ENCODE measurements at regions of chr11 and their contacts with region 1.

Region 1: GRCh38 chr11:43895601-43896000 is 15.0 kb downstream of the ALKBH3 start:
- DNase-seq: no peak
- ATAC-seq: no peak
- H3K4me3 ChIP-seq: no peak overlapping the region
- H3K27ac ChIP-seq: no peak overlapping the region
- H3K4me1 ChIP-seq: no peaks in the 10 kb centered on the region
- H3K27me3 ChIP-seq: no peaks in the 10 kb centered on the region
- CTCF ChIP-seq: no peak
- POLR2A ChIP-seq: no peak

Region 2: DNA sequence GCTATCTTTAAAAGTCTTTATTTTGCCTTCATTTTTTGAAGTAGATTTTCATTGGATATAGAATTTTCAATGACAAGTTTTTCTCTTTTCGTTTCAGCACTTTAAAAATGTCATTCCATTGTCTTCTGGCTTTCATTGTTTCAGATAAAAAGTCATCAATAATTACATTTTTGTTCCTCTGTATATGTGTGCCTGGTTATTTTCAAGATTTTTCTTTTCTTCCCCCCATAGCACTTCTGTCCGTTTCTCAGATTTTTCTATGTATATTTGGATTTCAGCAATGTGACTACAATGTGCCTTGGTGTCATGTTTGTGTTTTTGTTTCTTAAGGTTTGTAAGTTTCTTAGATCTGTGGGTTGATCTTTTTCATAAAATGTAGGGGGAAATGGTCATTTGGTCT is 281.4 kb before region 1 on chr11:
- intact Hi-C with region 1: no loop called
- DNase-seq: no peak
- ATAC-seq: no peak
- H3K4me3 ChIP-seq: no peak overlapping the region
- H3K27ac ChIP-seq: no peak overlapping the region
- H3K4me1 ChIP-seq: no peaks in the 10 kb centered on the region
- H3K27me3 ChIP-seq: peaks cover 0 to 5% (median 0%) of the 10 kb centered on the region in 9 donors
- CTCF ChIP-seq: no peak
- POLR2A ChIP-seq: no peak

Region 3: GRCh38 chr11:43830928-43831440 is 64.6 kb before region 1 on chr11:
- intact Hi-C with region 1: loop called in 1 of 10 experiments (anchors 10 kb)
- DNase-seq: peak in 1 of 5 donors; percentile 46
- ATAC-seq: peak in 3 of 4 donors; percentile 24 to 89 (median 85)
- H3K4me3 ChIP-seq: no peak overlapping the region
- H3K27ac ChIP-seq: peak overlapping the region in 2 of 12 donors; percentile 24
- H3K4me1 ChIP-seq: peaks cover 0 to 20% (median 3%) of the 10 kb centered on the region in 12 donors
- H3K27me3 ChIP-seq: no peaks in the 10 kb centered on the region
- CTCF ChIP-seq: no peak
- POLR2A ChIP-seq: no peak

Region 4: DNA sequence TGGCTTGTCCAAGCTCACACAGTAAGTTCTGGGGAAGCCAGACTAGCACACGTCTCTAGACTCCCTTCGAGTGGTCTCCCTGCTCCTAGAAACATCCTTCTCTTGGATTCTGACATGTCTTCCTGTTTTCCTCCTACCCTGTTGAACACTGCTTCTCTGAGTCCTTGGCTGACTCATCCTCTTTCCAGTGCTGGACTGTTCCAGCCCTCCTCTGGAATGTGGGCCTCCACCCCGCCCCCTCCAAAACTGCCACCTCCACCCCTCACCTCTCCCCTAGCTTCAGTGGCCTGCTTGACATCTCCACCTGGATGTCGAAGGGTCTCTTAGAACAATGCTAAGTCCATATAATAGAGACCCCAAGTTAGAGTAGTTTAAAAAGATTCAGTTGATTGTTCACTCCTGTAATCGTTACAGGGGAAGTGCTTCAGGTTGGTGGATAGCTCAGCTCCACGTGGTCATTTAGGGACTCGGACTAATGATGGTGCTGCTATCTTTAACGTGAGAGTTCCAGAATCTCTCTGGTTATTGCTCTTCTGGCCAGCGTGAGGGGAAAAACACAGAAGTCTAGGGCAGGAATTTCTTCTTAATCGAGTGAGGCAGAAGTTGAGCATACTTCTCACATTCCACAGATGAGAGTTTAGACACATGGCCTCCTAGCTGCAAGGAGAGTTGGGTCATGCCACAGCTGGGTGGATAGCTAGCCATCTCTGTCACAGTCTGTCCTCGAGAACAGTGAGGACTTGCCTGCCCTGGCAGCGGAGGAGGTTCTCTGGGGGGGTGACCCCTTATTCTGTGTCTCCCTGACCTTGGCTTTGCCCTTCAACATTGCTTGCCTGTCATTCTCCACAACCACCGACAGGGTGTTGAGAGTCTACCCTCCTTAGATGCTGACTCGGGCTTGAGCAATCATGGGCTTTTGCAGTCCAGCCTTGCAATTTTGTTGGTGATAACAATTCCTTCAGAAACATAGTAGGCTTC is 42.1 kb after region 1 on chr11:
- intact Hi-C with region 1: loop called in 7 of 10 experiments (anchors 2 to 10 kb)
- DNase-seq: no peak
- ATAC-seq: peak in 1 of 4 donors; percentile 17
- H3K4me3 ChIP-seq: no peak overlapping the region
- H3K27ac ChIP-seq: no peak overlapping the region
- H3K4me1 ChIP-seq: peaks cover 0 to 15% (median 0%) of the 10 kb centered on the region in 12 donors
- H3K27me3 ChIP-seq: peaks cover 0 to 14% (median 0%) of the 10 kb centered on the region in 9 donors
- CTCF ChIP-seq: peak in 2 of 12 donors; percentile 3 to 8
- POLR2A ChIP-seq: no peak

Region 5: GRCh38 chr11:43979571-43980190 is 84.1 kb after region 1 on chr11:
- intact Hi-C with region 1: no loop called
- DNase-seq: no peak
- ATAC-seq: no peak
- H3K4me3 ChIP-seq: no peak overlapping the region
- H3K27ac ChIP-seq: no peak overlapping the region
- H3K4me1 ChIP-seq: peaks cover 0 to 12% (median 8%) of the 10 kb centered on the region in 12 donors
- H3K27me3 ChIP-seq: no peaks in the 10 kb centered on the region
- CTCF ChIP-seq: no peak
- POLR2A ChIP-seq: no peak

Region 6: DNA sequence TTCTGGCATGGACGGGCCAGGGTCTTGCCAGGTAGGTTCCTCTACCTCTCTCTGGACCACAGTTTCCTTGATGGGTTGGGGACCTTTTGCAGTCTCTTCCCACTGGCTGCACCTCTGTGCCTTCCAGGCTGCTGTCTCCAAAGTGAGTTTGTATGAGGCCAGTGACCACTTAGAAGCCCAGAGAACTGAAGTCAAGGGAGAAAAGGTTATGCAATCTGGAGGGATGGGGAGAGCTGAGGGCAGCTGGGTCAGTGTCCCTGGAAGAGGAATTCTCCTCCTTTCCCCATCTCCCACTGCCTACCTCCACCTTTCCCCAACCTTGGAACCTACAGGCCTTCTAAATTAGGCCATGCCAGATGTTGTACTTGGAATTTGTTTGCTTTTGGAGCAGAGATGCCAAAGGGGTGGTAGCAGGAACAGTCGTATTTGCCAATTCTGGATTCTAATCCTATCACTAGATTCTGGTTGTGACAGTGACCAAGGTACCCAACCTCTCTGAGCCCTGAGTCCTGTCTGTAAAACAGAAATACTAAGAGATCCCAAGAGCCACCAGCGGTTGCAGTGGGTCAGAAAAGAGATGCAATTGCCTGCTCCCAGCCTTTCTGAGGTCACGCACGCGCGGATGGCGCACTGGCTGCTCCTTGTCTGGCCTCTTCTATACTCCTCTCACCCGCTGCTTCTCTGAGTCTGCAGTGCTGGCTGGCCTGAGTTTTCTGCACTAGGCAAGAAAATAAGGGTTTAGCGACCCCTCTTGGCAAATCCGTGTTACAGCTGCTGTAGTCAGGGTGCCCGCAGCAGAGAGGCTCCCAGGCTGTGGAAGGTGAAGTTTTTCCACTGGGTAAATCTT is 141.4 kb after region 1 on chr11:
- intact Hi-C with region 1: loop called (anchors 1 to 2 kb)
- DNase-seq: peak; percentile 81 to 90 (median 88)
- ATAC-seq: peak; percentile 85 to 94 (median 92)
- H3K4me3 ChIP-seq: no peak overlapping the region
- H3K27ac ChIP-seq: peak overlapping the region in 2 of 12 donors; percentile 33 to 52
- H3K4me1 ChIP-seq: peaks cover 0 to 26% (median 16%) of the 10 kb centered on the region in 12 donors
- H3K27me3 ChIP-seq: no peaks in the 10 kb centered on the region
- CTCF ChIP-seq: peak; percentile 63 to 95 (median 88)
- POLR2A ChIP-seq: no peak

Region 7: DNA sequence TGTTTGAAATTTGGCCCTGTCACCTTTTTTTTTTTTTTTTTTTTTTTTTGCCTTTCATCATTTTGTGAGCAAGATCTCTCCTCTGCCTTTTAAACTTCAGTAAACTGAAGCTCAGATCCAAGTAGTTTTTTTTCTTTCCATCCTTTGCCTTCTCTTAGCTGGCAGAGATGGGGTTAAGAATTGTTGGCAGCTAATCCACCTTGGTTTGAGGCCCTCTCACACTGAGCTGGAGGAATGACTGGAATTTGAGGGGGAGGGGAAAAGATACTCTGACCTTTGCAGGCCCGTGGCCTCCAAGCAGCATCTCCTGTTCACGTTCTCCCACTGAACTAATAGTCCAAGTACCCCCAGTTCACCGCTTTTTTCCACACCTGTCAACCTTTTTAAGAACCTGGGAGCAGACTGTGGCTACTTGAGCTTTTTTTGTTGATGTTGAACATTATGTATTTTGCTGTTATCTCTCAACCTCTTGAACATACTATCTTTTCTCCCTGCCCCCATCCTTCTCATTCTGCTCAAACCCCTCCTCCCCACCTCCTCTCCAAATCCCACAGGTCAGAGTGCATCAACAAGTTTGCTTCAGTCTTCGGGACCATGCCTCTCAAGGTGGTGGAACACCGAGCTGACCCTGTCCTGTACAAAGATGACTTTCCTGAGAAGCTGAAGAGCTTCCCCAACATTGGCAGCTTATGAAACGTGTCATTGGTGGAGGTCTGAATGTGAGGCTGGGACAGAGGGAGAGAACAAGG is 348.2 kb after region 1 on chr11:
- intact Hi-C with region 1: no loop called
- DNase-seq: no peak
- ATAC-seq: peak in 2 of 4 donors; percentile 35 to 54
- H3K4me3 ChIP-seq: no peak overlapping the region
- H3K27ac ChIP-seq: peak overlapping the region in 2 of 12 donors; percentile 13 to 39
- H3K4me1 ChIP-seq: peaks cover 0 to 65% (median 35%) of the 10 kb centered on the region in 12 donors
- H3K27me3 ChIP-seq: no peaks in the 10 kb centered on the region
- CTCF ChIP-seq: no peak
- POLR2A ChIP-seq: no peak

Measured in heart left ventricle (tissue), 16 donors.